ENCODE measurements at regions of chr2 and their contacts with region 1.

Region 1: DNA sequence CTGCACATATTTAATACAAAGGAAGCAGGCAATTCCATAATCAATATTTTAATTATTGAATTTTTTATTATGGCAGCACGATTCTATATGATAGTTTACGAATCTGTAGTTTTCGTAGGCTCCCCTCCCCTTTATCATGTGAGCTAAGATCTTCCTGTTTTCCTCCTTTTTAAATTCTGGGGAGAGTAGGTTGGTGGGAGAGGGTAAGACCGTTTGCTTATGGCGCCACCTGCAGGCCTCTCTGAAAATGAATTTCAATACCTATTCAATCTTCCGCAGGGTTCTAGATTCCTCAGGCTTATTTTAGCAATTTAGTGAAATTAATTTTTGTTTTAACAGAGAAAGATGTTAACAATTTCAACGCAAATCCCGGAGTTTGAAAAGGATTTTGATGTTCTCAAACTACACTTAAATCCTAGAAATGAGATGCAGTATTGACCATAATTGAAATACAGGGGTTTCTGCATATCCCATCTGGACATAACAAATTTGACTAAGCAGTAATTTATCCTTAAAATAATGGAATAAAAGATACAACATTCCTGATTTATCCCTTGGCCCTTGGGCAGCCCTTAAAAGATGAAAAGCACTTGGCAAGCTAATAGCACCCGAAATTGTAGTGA is 12.8 kb upstream of the GBX2 start:
- DNase-seq: peak; percentile 73
- ATAC-seq: no peak
- H3K4me3 Mint-ChIP-seq: no peak overlapping the region
- H3K27ac Mint-ChIP-seq: no peak overlapping the region
- H3K4me1 Mint-ChIP-seq: peaks cover 13% of the 10 kb centered on the region
- H3K27me3 Mint-ChIP-seq: peaks cover 59% of the 10 kb centered on the region

Region 2: GRCh38 chr2:235766278-235766677 is 414.7 kb before region 1 on chr2:
- CTCF ChIA-PET with region 1: interaction called, 14 read pairs
- POLR2A ChIA-PET with region 1: no interaction called
- intact Hi-C with region 1: loop called (anchors 1 kb)
- DNase-seq: peak; percentile 70
- ATAC-seq: peak; percentile 83
- H3K4me3 Mint-ChIP-seq: no peak overlapping the region
- H3K27ac Mint-ChIP-seq: no peak overlapping the region
- H3K4me1 Mint-ChIP-seq: no peaks in the 10 kb centered on the region
- H3K27me3 Mint-ChIP-seq: peaks cover 5% of the 10 kb centered on the region

Region 3: DNA sequence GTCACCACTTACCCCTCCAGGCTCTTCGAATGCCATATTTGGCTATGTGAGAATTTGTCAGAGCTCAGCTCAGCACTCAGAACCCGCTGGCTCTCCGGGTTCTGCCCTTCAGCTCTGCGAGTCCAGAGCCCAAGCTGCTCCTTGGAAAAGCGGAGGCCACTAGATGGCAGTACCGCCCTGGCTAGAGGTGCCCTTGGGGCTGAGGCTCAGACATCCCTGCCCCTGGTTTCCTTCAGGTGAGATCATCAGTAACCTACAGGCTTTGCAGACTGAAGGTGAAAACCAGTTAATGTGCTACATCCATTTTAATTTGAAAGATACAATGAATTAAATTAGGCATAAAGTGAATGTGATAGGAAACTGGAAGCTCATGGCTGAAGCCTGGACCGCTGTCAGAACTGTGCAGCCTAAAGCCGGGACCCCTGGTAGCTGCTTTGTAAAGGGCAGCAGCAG is 401.5 kb before region 1 on chr2:
- CTCF ChIA-PET with region 1: interaction called, 35 read pairs
- POLR2A ChIA-PET with region 1: no interaction called
- intact Hi-C with region 1: loop called (anchors 1 kb)
- DNase-seq: peak; percentile 84
- ATAC-seq: peak; percentile 87
- H3K4me3 Mint-ChIP-seq: no peak overlapping the region
- H3K27ac Mint-ChIP-seq: no peak overlapping the region
- H3K4me1 Mint-ChIP-seq: no peaks in the 10 kb centered on the region
- H3K27me3 Mint-ChIP-seq: peaks cover 22% of the 10 kb centered on the region

Region 4: GRCh38 chr2:235936493-235936892 is 244.4 kb before region 1 on chr2:
- CTCF ChIA-PET with region 1: interaction called, 3 read pairs
- POLR2A ChIA-PET with region 1: no interaction called
- intact Hi-C with region 1: loop called (anchors 1 to 2 kb)
- DNase-seq: peak; percentile 46
- ATAC-seq: no peak
- H3K4me3 Mint-ChIP-seq: no peak overlapping the region
- H3K27ac Mint-ChIP-seq: no peak overlapping the region
- H3K4me1 Mint-ChIP-seq: no peaks in the 10 kb centered on the region
- H3K27me3 Mint-ChIP-seq: peaks cover 17% of the 10 kb centered on the region

Region 5: GRCh38 chr2:236049981-236050380 is 131.0 kb before region 1 on chr2:
- CTCF ChIA-PET with region 1: interaction called, 3 read pairs
- POLR2A ChIA-PET with region 1: no interaction called
- intact Hi-C with region 1: loop called in 1 of 2 experiments (anchors 5 kb)
- DNase-seq: peak; percentile 40
- ATAC-seq: peak; percentile 85
- H3K4me3 Mint-ChIP-seq: no peak overlapping the region
- H3K27ac Mint-ChIP-seq: no peak overlapping the region
- H3K4me1 Mint-ChIP-seq: peaks cover 9% of the 10 kb centered on the region
- H3K27me3 Mint-ChIP-seq: peaks cover 31% of the 10 kb centered on the region

Region 6: DNA sequence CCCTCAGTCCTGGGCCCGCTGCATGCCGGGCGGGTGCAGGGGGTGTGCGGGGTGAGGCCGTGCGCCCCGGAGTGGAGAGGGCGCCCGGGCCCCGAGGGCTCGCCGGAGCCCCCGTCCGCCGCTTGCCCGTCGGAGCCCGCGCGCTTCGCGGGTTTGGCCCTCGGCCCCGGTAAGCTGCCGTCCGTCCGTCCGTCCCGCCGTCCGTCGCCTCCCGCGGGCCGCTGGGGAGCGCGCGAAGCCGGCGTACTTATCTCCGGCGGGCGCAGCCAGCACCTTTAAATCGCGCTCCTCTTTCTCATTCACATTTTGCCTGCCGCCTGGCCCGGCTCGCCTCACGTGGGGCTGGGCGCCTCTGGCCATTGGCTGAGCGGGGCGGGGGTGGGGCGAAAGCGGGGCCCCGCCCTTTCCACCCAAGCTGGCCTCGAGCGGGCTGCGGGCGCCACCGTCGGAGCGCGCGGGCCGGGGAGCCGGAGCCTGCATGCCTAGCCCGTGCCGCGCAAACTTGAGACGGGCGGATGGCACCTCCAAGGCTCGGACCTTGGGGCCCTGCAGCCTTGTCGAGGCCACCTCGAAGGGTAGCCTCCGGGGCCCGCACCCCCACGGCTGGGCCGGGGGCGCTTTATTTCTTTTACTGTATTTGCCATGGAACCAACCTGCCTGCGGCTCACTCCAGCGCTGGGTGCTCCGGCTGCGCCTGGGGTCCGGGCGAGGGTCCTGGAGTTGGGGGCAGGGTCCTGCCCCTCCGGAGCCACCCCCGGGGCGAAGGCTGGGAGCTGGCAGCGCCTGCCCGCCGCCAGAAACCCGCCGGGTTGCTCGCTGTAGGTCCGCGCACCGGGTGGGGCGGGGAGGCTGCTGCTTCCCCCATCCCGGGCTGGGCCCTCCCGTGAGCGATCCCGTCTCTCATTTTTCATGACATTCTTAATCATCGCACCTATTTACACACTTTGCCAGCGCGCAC is 12.6 kb before region 1 on chr2 and contains the start of gene GBX2:
- CTCF ChIA-PET with region 1: interaction called, 6 read pairs
- POLR2A ChIA-PET with region 1: no interaction called
- intact Hi-C with region 1: loop called (anchors 1 to 2 kb)
- DNase-seq: peak; percentile 49
- ATAC-seq: peak; percentile 53
- H3K4me3 Mint-ChIP-seq: peak within 1 kb of the TSS; percentile 12
- H3K27ac Mint-ChIP-seq: no peak within 1 kb of the TSS
- H3K4me1 Mint-ChIP-seq: peaks cover 11% of the 10 kb centered on the region
- H3K27me3 Mint-ChIP-seq: peaks cover 57% of the 10 kb centered on the region
- total RNA-seq, gene GBX2: not detected

Measured in activated CD4-positive, alpha-beta T cell treated with anti-CD3 and anti-CD28 coated beads for 36 hours (primary cell).